Caco-2 (cell line): ENCODE measurements at regions of chr5 and their contacts with region 1.

Region 1: DNA sequence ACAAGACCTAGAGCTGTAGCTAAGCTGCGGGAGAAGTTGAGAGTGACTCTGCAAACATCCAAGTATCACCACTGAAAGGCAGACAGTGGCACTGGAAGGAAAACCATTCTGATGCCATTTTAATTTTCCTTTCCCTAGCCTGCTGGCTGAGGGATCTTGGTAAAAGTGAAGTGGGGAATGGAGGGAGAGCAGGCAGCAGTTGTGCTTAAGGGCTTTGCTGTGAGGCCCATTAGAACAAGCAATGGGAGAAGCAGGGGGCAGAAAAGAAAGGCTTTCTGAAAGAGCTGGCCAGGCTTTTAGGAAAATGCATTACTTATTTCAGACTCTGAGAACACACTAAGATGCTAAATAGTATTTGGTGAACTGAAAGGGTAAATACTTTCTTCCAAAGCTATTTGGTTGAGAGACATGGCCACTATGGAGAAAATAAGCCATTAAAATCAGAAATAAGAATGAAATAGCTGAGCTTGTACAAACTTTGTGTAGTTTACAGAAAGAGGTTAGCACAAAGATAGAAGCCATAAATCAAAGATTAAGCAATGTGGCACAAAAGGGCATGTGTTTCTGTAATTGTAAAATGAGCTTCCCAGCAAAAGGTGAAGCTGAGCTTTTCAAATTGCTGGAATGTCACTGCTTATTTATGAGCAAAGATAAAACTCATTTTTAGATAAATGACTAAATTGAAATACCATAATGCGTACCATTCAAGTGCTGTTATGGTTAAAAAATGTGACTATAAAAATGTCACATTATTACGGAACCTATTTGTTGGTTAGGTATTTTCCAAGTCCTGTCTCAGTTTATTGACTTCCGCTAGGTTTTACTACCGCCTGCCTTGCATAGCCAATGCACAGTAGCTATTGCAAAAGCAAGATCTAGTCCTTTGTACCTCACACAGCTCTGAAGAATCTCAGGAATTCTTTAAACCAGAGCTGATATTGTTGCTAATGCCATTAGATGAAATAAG is 20.8 kb downstream of the SNCAIP start:
- DNase-seq: peak; percentile 59 to 69
- H3K4me3 ChIP-seq: no peak overlapping the region
- H3K4me3 Mint-ChIP-seq: peak overlapping the region; percentile 42
- H3K27ac Mint-ChIP-seq: peak overlapping the region; percentile 53
- H3K4me1 ChIP-seq: peaks cover 23% of the 10 kb centered on the region
- H3K4me1 Mint-ChIP-seq: peaks cover 21% of the 10 kb centered on the region
- H3K27me3 ChIP-seq: no peaks in the 10 kb centered on the region
- H3K27me3 Mint-ChIP-seq: no peaks in the 10 kb centered on the region
- CTCF ChIP-seq: no peak

Region 2: GRCh38 chr5:122311961-122312590 is 20.8 kb before region 1 on chr5 and contains the start of gene SNCAIP:
- CTCF ChIA-PET with region 1: no interaction called
- POLR2A ChIA-PET with region 1: no interaction called
- intact Hi-C with region 1: loop called (anchors 2 kb)
- DNase-seq: peak; percentile 56 to 63
- H3K4me3 ChIP-seq: peak within 1 kb of the TSS; percentile 43
- H3K4me3 Mint-ChIP-seq: peak within 1 kb of the TSS; percentile 75
- H3K27ac Mint-ChIP-seq: no peak within 1 kb of the TSS
- H3K4me1 ChIP-seq: no peaks in the 10 kb centered on the region
- H3K4me1 Mint-ChIP-seq: peaks cover 9% of the 10 kb centered on the region
- H3K27me3 ChIP-seq: no peaks in the 10 kb centered on the region
- H3K27me3 Mint-ChIP-seq: peaks cover 6% of the 10 kb centered on the region
- CTCF ChIP-seq: no peak
- total RNA-seq, gene SNCAIP: 1.0 and 1.2 TPM in 2 replicates

Region 3: DNA sequence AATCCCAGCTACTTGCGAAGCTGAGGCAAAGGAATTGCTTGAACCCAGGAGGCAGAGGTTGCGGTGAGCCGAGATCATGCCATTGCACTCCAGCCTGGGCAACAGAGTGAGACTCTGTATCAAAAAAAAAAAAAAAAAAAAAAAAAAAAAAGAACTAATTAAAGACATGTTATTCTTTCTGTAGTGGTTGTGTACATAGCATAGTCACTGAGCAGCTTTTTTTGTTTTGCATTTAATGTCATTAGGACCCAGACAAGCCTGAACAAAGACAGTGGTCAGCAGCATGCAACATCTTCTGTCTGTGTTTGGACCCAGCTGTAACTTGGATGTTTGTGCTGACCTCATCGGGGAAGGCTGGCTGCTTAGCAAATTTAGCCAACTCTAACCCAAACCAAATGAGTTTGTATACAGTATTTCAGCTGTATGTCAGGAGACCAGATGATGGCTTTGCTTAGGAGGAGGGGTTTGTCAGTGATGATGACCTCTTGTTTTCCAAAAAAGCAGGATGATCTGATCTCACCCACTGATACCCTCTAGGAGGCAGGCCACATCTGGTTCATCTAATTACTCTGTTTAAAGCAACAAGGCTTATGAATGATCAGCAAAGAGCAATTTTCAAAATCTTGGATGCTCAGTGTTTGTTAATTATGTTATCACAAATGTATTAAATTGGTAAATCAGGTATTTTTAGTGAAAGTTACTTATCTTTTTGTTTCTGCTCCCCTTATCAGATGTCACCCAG is 18.7 kb after region 1 on chr5:
- CTCF ChIA-PET with region 1: no interaction called
- POLR2A ChIA-PET with region 1: no interaction called
- intact Hi-C with region 1: loop called (anchors 2 kb)
- DNase-seq: peak in 1 of 2 experiments; percentile 43
- H3K4me3 ChIP-seq: no peak overlapping the region
- H3K4me3 Mint-ChIP-seq: peak overlapping the region; percentile 31
- H3K27ac Mint-ChIP-seq: peak overlapping the region; percentile 56
- H3K4me1 ChIP-seq: peaks cover 25% of the 10 kb centered on the region
- H3K4me1 Mint-ChIP-seq: peaks cover 24% of the 10 kb centered on the region
- H3K27me3 ChIP-seq: no peaks in the 10 kb centered on the region
- H3K27me3 Mint-ChIP-seq: no peaks in the 10 kb centered on the region
- CTCF ChIP-seq: no peak

Region 4: DNA sequence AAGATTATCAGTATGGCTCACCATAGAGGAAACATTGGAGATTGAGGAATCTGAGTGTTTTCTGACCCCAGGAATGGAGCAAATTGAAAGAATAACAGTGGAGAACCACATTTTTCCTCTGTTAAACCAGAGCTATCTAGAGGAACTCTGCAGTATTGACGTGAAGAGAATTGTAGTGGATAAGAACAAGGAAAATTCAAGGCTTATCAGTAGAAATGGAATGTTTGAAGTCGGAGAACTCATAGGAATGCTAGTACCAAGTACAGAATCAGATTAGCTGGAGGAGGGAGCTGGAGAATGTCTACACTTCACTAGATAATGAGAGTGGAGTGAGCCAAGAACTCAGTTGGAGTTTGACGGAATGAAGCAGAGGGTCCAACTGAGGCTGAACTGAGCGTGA is 29.5 kb after region 1 on chr5:
- CTCF ChIA-PET with region 1: interaction called, 4 read pairs
- POLR2A ChIA-PET with region 1: no interaction called
- intact Hi-C with region 1: loop called (anchors 1 kb)
- DNase-seq: peak in 1 of 2 experiments; percentile 37
- H3K4me3 ChIP-seq: no peak overlapping the region
- H3K4me3 Mint-ChIP-seq: peak overlapping the region; percentile 60
- H3K27ac Mint-ChIP-seq: peak overlapping the region; percentile 79
- H3K4me1 ChIP-seq: peaks cover 29% of the 10 kb centered on the region
- H3K4me1 Mint-ChIP-seq: peaks cover 16% of the 10 kb centered on the region
- H3K27me3 ChIP-seq: no peaks in the 10 kb centered on the region
- H3K27me3 Mint-ChIP-seq: no peaks in the 10 kb centered on the region
- CTCF ChIP-seq: no peak

Region 5: DNA sequence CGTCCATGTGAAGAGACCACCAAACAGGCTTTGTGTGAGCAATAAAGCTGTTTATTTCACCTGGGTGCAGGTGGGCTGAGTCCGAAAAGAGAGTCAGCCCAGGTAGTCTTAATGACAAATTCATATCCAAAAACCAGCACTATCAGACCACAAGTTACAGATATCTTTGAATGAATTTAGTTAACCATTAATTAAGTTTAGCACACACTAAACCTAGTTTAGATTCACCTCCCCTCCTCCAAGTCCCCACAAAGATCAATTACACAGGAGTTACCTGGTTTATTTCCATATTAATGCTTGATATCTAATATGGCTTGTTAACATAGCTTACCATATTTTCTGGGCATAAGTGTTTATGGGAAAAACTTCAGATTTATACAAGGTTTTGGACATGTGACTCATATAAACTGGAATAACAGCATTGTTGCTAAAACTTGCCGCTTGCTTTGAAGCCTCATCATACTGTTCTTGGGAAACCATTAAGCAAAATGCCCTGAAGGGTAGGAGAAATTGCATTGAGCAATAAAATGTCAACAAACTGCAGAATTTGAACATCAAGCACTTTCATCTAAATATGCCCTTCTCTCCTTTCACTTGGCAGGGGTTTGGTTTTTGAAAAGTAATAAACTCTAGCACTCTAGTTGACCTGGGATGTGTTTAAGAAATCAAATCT is 146.0 kb after region 1 on chr5:
- CTCF ChIA-PET with region 1: no interaction called
- POLR2A ChIA-PET with region 1: no interaction called
- intact Hi-C with region 1: loop called (anchors 1 kb)
- DNase-seq: peak; percentile 50 to 75
- H3K4me3 ChIP-seq: peak overlapping the region; percentile 32
- H3K4me3 Mint-ChIP-seq: peak overlapping the region; percentile 83
- H3K27ac Mint-ChIP-seq: peak overlapping the region; percentile 94
- H3K4me1 ChIP-seq: peaks cover 30% of the 10 kb centered on the region
- H3K4me1 Mint-ChIP-seq: peaks cover 33% of the 10 kb centered on the region
- H3K27me3 ChIP-seq: no peaks in the 10 kb centered on the region
- H3K27me3 Mint-ChIP-seq: no peaks in the 10 kb centered on the region
- CTCF ChIP-seq: no peak